SK-N-SH (cell line): ENCODE measurements at regions of chr3 and their contacts with region 1.

Region 1: GRCh38 chr3:128794770-128795649 is 69.0 kb downstream of the RAB7A start:
- DNase-seq: peak; percentile 81
- H3K4me3 ChIP-seq: no peak overlapping the region; a peak in 1 of 4 replicates
- H3K27ac ChIP-seq: peak overlapping the region; percentile 20 to 69; a peak in 3 of 4 replicates
- H3K4me1 ChIP-seq: peaks cover 5 to 13% of the 10 kb centered on the region in 2 experiments; a peak in 2 of 4 replicates
- H3K27me3 ChIP-seq: no peaks in the 10 kb centered on the region
- CTCF ChIP-seq: peak; percentile 82
- EP300 ChIP-seq: no peak
- RAD21 ChIP-seq: peak; percentile 78

Region 2: GRCh38 chr3:128335324-128336201 is 459.4 kb before region 1 on chr3:
- CTCF ChIA-PET with region 1: no interaction called
- POLR2A ChIA-PET with region 1: no interaction called
- DNase-seq: no peak
- H3K4me3 ChIP-seq: no peak overlapping the region
- H3K27ac ChIP-seq: peak overlapping the region in 1 of 2 experiments; percentile 30; a peak in 1 of 4 replicates
- H3K4me1 ChIP-seq: peaks cover 0 to 48% of the 10 kb centered on the region in 2 experiments; a peak in 1 of 4 replicates
- H3K27me3 ChIP-seq: no peaks in the 10 kb centered on the region
- CTCF ChIP-seq: no peak
- EP300 ChIP-seq: no peak
- RAD21 ChIP-seq: no peak

Region 3: GRCh38 chr3:128780101-128780837 is 14.7 kb before region 1 on chr3:
- CTCF ChIA-PET with region 1: interaction called, 33 read pairs
- POLR2A ChIA-PET with region 1: no interaction called
- DNase-seq: no peak
- H3K4me3 ChIP-seq: no peak overlapping the region
- H3K27ac ChIP-seq: no peak overlapping the region
- H3K4me1 ChIP-seq: peaks cover 0 to 11% of the 10 kb centered on the region in 2 experiments; a peak in 1 of 4 replicates
- H3K27me3 ChIP-seq: no peaks in the 10 kb centered on the region
- CTCF ChIP-seq: no peak
- EP300 ChIP-seq: no peak
- RAD21 ChIP-seq: no peak

Region 4: DNA sequence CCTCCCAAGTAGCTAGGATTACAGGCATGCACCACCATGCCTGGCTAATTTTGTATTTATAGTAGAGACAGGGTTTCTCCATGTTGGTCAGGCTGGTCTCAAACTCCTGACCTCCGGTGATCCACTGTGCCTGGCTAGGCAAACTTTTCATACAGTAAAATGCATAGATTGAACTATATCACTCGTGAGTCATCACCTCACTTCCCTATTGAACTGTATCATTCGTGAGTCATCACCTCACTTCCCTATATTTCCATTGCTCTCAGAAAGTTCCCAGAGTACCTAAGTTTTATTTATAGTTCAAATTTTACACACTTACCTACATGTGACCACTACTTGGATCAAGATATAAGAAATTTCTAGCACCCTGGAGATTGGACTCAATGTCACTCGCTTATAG is 10.8 kb after region 1 on chr3:
- CTCF ChIA-PET with region 1: interaction called, 17 read pairs
- POLR2A ChIA-PET with region 1: no interaction called
- DNase-seq: no peak
- H3K4me3 ChIP-seq: no peak overlapping the region
- H3K27ac ChIP-seq: peak overlapping the region in 1 of 2 experiments; percentile 57; a peak in 2 of 4 replicates
- H3K4me1 ChIP-seq: peaks cover 0 to 13% of the 10 kb centered on the region in 2 experiments
- H3K27me3 ChIP-seq: no peaks in the 10 kb centered on the region
- CTCF ChIP-seq: no peak
- EP300 ChIP-seq: no peak
- RAD21 ChIP-seq: no peak

Region 5: GRCh38 chr3:128813097-128813496 is 18.1 kb after region 1 on chr3:
- CTCF ChIA-PET with region 1: interaction called, 17 read pairs
- POLR2A ChIA-PET with region 1: no interaction called
- DNase-seq: no peak
- H3K4me3 ChIP-seq: no peak overlapping the region
- H3K27ac ChIP-seq: no peak overlapping the region; a peak in 1 of 4 replicates
- H3K4me1 ChIP-seq: no peaks in the 10 kb centered on the region
- H3K27me3 ChIP-seq: no peaks in the 10 kb centered on the region
- CTCF ChIP-seq: no peak
- EP300 ChIP-seq: no peak
- RAD21 ChIP-seq: no peak

Region 6: DNA sequence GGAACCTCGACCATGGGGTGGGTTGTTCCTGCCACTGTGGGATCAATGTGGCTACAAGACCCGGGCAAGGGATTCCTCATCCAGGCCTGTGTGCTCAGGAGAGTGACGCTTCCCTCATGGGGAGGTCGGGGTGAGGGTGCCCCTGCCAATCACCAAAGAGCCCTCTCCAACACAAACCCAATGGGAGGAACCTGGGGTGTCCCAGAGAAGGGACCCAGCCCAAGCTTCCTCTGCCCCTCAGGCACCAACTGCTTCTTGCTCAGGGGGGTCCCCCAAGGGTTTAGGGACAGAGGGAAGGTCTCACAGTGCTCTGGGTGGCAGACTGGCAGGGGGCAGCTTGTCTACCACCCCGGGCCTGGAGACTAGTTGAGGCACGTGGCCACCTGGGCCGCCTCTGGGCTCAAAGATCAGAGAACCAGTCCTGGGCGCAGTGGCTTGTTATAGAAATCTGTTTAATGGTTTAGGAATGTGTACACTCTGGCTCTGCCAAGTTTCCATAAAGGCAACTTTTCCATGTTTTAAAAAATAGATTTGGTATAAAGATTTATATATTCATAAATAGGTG is 292.2 kb after region 1 on chr3:
- CTCF ChIA-PET with region 1: no interaction called
- POLR2A ChIA-PET with region 1: no interaction called
- DNase-seq: no peak
- H3K4me3 ChIP-seq: no peak overlapping the region
- H3K27ac ChIP-seq: no peak overlapping the region
- H3K4me1 ChIP-seq: no peaks in the 10 kb centered on the region
- H3K27me3 ChIP-seq: no peaks in the 10 kb centered on the region
- CTCF ChIP-seq: no peak
- EP300 ChIP-seq: no peak
- RAD21 ChIP-seq: no peak